ENCODE measurements at regions of chr14 and their contacts with region 1.

Region 1: GRCh38 chr14:100375963-100376735 is 53.0 kb downstream of the SLC25A47 start:
- DNase-seq: peak; percentile 95 to 97 (median 97)
- ATAC-seq: peak; percentile 92 to 97 (median 94)
- H3K4me3 ChIP-seq: peak within 1 kb of the TSS; percentile 61 to 94 (median 76)
- H3K27ac ChIP-seq: peak within 1 kb of the TSS; percentile 85 to 98 (median 94)
- H3K4me1 ChIP-seq: peaks cover 0 to 55% (median 18%) of the 10 kb centered on the region in 12 donors
- H3K27me3 ChIP-seq: no peaks in the 10 kb centered on the region
- CTCF ChIP-seq: no peak
- POLR2A ChIP-seq: peak in 1 of 2 donors; percentile 78

Region 2: DNA sequence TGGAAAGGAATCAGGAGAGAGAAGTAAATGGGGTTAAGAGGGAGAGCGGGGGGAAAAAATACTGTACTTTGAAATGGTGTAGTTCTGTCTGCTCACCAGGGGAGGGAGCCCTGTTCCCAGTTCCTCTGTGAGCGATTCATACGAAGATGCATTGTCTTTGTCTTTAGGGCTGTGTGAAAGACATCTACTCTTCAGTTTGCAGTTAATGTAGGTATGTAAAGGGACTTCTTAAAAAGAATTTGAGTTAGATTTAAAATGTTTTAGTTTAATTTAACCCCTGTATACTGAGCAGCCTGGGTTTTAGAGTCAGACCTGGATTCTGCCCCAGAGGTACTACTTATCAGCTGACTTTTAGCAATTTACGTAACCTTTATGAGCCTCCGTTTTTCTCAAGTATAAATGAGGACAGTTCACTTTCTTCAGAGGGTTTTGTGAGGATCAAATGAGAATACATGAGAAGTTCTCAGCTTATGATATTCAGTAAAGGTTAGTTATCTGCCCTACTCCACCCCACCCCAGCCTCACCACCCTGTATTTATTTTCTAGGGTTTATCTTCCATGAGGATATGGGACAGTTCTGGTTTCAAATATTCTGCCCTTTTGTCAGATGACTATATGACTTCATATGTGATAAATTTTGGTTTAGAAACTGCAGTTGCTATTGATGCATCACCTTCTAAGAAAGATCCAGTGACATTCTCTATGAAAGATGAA is 393.5 kb before region 1 on chr14:
- intact Hi-C with region 1: loop called in 4 of 10 experiments (anchors 5 to 10 kb)
- DNase-seq: peak in 3 of 5 donors; percentile 48 to 59 (median 57)
- ATAC-seq: peak; percentile 77 to 92 (median 89)
- H3K4me3 ChIP-seq: no peak overlapping the region
- H3K27ac ChIP-seq: no peak overlapping the region
- H3K4me1 ChIP-seq: peaks cover 0 to 20% (median 2%) of the 10 kb centered on the region in 12 donors
- H3K27me3 ChIP-seq: no peaks in the 10 kb centered on the region
- CTCF ChIP-seq: peak; percentile 78 to 94 (median 90)
- POLR2A ChIP-seq: no peak

Region 3: GRCh38 chr14:100192672-100193416 is 183.3 kb before region 1 on chr14:
- intact Hi-C with region 1: loop called in 1 of 10 experiments (anchors 2 kb)
- DNase-seq: peak; percentile 99 to 100 (median 99)
- ATAC-seq: peak; percentile 99 to 100 (median 100)
- H3K4me3 ChIP-seq: peak overlapping the region in 11 of 12 donors; percentile 16 to 63 (median 52)
- H3K27ac ChIP-seq: peak overlapping the region; percentile 80 to 97 (median 90)
- H3K4me1 ChIP-seq: peaks cover 0 to 21% (median 14%) of the 10 kb centered on the region in 12 donors
- H3K27me3 ChIP-seq: no peaks in the 10 kb centered on the region
- CTCF ChIP-seq: peak; percentile 89 to 98 (median 96)
- POLR2A ChIP-seq: peak in 1 of 2 donors; percentile 58

Region 4: GRCh38 chr14:100271247-100271939 is 104.8 kb before region 1 on chr14:
- intact Hi-C with region 1: loop called in 1 of 10 experiments (anchors 2 kb)
- DNase-seq: no peak
- ATAC-seq: no peak
- H3K4me3 ChIP-seq: no peak overlapping the region
- H3K27ac ChIP-seq: no peak overlapping the region
- H3K4me1 ChIP-seq: peaks cover 0 to 34% (median 9%) of the 10 kb centered on the region in 12 donors
- H3K27me3 ChIP-seq: no peaks in the 10 kb centered on the region
- CTCF ChIP-seq: peak in 9 of 12 donors; percentile 17 to 47 (median 33)
- POLR2A ChIP-seq: no peak

Region 5: DNA sequence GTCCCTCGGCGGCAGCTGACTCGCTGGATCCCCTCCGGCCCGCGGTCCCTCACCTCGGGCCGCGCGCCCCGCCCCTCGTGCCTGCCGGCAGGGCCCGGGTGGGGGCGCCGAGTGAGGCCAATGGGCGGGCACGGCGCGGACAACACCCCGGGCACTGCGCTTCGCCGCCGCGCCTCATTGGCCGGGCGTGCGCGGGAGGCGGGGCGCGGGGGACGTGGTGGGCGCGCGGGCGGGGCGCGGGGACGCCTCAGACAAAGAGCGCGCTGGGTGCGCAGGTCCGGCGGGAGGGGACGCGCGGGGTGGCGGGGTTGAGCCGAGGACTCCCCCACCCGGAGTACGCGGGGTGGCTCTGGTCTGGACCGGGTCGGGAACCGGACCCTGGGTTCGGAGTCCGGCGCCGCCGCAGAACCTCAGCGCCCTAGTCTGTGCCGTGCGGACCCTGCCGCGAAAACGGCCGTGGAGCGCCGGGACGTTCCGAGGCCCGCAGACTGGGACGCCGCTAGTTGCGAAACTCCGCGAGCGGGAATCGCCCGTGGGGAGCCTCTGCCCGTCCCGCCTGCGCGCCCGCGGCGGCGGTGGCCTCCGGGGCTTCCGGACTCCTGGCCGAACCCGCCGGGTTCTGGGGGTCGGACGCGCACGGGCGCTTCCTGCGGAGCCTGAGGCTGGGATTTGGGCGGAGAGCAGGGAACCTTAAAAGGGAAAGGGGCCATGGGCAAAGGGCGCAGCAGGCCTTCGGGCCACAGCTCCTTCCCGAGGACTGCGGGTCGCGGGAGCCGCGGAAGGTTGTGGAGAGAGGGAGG is 69.5 kb before region 1 on chr14 and contains the start of gene SLC25A29:
- intact Hi-C with region 1: loop called in 8 of 10 experiments (anchors 2 to 5 kb)
- DNase-seq: peak; percentile 90 to 94 (median 92)
- ATAC-seq: peak; percentile 68 to 94 (median 91)
- H3K4me3 ChIP-seq: peak within 1 kb of the TSS; percentile 59 to 99 (median 88)
- H3K27ac ChIP-seq: peak within 1 kb of the TSS; percentile 82 to 95 (median 90)
- H3K4me1 ChIP-seq: peaks cover 0 to 61% (median 29%) of the 10 kb centered on the region in 12 donors
- H3K27me3 ChIP-seq: no peaks in the 10 kb centered on the region
- CTCF ChIP-seq: no peak
- POLR2A ChIP-seq: peak; percentile 3 to 84
- total RNA-seq, gene SLC25A29: 10.2 to 34.2 (median 20.1) TPM

Region 6: DNA sequence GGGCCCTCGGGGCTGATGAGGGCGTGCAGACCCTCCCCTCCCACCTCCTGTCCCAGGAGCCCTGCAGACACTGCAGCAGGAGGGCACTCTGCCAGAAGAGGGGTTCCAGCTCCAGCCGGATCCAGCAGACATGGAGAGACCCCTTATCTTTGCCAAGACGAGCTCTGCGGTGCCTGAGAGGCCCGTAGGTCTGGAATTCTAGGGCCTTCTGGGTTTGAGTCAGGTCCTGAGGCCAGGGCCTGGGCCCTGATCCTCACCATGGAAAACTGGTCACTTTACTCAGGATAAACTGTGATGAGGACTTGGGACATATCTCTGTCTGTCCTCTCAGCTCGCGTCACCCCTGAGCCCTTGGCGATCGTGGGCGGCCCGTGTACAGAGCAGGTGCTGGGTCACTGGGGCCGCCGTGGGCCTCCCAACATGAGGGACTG is 463.5 kb after region 1 on chr14:
- intact Hi-C with region 1: no loop called
- DNase-seq: peak in 2 of 5 donors; percentile 21 to 42
- ATAC-seq: peak in 1 of 4 donors; percentile 30
- H3K4me3 ChIP-seq: no peak overlapping the region
- H3K27ac ChIP-seq: no peak overlapping the region
- H3K4me1 ChIP-seq: no peaks in the 10 kb centered on the region
- H3K27me3 ChIP-seq: peaks cover 0 to 16% (median 0%) of the 10 kb centered on the region in 9 donors
- CTCF ChIP-seq: no peak
- POLR2A ChIP-seq: no peak